Activated CD4-positive, alpha-beta T cell treated with anti-CD3 and anti-CD28 coated beads for 36 hours (primary cell): ENCODE measurements at regions of chr9 and their contacts with region 1.

Region 1: GRCh38 chr9:105157130-105157583 is 87.3 kb upstream of the SLC44A1 start:
- DNase-seq: peak; percentile 46
- ATAC-seq: peak; percentile 86
- H3K4me3 Mint-ChIP-seq: no peak overlapping the region
- H3K27ac Mint-ChIP-seq: no peak overlapping the region
- H3K4me1 Mint-ChIP-seq: peaks cover 14% of the 10 kb centered on the region
- H3K27me3 Mint-ChIP-seq: no peaks in the 10 kb centered on the region

Region 2: DNA sequence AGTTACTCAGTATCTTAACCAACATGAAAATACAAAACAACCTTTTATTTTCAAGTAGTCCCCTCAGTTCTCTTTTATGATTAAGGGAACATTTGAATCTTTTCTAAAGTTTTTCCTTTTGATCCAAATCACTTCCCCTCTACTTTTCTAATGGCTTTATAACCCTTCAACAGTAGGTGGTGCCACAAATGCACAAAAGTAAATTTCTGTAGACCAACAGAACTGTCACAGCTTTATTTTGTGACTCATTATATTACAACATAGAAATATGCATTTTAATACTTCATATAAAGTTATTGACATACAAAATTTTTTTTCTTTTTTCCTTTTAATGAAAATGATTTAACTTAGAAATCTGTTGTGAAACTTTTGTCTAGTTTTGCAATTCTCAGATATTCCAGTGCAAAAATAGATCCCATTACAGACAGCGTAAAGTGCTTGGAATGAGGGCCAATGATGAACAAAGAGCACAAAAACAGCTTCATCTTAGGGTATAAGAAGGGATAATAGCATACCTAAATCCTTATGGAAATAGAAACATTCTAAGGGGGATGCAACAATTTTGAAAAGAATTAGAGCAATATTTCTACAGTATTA is 376.3 kb before region 1 on chr9:
- CTCF ChIA-PET with region 1: no interaction called
- POLR2A ChIA-PET with region 1: no interaction called
- intact Hi-C with region 1: loop called (anchors 2 kb)
- DNase-seq: no peak
- ATAC-seq: peak; percentile 55
- H3K4me3 Mint-ChIP-seq: no peak overlapping the region
- H3K27ac Mint-ChIP-seq: no peak overlapping the region
- H3K4me1 Mint-ChIP-seq: no peaks in the 10 kb centered on the region
- H3K27me3 Mint-ChIP-seq: no peaks in the 10 kb centered on the region

Region 3: DNA sequence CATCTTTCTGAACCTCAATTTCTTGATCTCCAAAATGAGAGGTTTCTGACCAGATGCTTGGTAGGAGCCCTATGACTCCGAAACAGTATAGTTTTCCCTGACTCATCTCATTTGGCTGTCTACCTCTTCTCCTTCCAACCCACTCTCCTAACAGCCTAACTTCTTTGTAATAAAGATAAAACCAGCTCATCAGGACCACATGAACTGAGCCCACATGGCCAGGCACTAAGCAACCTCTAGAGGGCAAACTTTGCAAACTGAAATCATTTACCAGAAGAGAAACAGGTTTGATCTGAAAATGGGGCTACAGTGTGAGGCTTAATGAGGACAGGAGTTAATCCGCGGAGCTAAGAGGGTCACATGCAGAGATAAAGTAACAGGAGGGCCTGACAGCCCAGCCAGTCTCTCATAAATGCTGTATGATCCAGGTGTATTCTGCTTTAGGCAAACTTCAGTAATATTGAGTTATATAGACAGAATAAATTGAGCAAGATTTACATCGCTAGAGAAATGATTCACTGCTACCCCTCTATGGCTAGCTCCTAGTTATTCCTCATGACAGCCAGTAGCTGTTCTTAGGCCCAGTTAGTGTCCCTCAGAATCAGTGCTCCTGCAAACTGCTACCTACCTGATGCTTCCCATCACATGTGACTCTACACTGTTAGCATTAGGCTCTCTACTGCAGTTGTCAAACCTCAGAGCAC is 293.8 kb before region 1 on chr9:
- CTCF ChIA-PET with region 1: interaction called, 4 read pairs
- POLR2A ChIA-PET with region 1: no interaction called
- intact Hi-C with region 1: loop called (anchors 1 kb)
- DNase-seq: peak; percentile 62
- ATAC-seq: peak; percentile 94
- H3K4me3 Mint-ChIP-seq: no peak overlapping the region
- H3K27ac Mint-ChIP-seq: no peak overlapping the region
- H3K4me1 Mint-ChIP-seq: peaks cover 7% of the 10 kb centered on the region
- H3K27me3 Mint-ChIP-seq: no peaks in the 10 kb centered on the region